Mucosa of descending colon (tissue), 3 donors: ENCODE measurements at regions of chr19 and their contacts with region 1.

Region 1: DNA sequence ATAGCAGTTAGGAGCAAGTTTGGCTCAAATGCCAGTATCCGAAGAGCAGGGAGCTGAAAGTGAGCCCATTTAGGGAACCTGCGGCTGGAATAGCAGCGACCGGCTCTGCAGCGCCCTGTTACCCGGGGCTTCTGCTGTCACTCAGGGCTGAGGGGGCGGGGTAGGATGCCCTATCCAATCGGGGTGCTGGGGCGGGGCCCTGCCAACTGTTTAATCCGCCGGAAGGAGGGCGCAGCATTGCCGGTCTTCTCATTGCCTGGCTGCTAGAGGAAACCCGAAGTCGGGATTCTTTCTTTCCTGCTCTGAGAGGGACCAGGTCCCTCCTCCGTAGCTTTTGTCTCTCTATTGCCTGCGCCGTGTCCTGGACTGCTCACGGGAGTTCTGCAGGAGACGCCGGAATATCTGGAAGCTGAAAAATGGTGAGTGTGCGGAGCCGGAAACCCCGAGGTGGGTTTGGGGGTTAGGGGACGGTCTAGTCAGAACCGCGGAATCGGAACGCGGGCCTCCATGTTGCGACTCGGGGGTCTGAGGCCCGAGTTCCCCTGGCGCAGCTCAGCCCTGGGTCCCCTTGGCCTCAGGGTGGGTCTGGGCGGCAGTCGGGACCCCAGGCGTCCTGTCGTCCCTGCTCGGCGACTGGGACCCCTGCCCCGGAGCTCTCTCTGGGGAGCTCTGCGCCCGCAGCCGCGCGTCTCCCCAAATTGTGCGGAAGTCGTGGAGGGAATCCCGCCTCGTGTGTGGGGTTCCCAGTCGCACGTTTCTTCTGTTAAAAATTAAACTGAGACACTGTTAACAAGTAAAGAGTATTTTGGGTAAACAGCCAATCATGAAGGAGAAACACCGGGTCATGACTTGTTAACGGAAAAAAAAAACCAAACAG is 22.8 kb downstream of the ZNF763 start:
- DNase-seq: peak; percentile 97 to 99 (median 97)
- ATAC-seq: peak; percentile 99
- H3K4me3 ChIP-seq: peak overlapping the region; percentile 66
- H3K4me1 ChIP-seq: no peaks in the 10 kb centered on the region
- CTCF ChIP-seq: no peak

Region 2: DNA sequence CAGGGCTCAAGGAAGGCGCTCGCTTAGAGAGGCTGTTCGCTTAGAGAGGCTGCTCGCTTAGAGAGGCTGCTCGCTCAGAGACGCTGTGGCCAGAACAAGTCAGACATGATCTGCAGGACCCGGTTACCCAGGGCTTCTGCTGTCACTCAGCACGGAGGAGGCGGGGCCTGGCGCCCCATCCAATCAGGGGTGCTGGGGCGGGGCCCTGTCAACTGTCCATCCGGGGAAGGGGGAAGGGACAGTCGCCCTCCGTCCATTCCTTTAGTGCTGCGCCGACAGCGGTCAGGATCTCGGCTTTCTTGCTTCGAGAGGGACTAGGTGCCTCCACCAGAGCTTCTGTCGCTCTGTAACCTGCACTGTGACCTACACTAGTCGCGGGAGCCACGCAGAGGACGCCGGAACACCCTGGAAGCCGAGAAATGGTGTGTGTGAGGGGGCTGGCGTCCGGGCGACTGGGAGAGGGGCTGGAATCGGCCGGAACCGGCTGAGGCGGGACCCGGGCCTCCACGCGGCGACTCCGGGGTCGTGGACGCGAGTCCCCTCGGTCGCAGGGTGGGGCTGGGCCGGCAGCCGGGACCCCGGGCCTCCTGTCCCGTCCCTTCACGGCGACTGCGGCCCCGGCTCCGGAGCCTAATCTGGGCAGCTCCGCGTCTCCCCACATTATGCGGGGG is 173.5 kb before region 1 on chr19 and contains the start of gene ZNF440:
- intact Hi-C with region 1: no loop called
- DNase-seq: peak; percentile 96 to 99 (median 98)
- ATAC-seq: peak; percentile 97
- H3K4me3 ChIP-seq: peak within 1 kb of the TSS; percentile 85
- H3K4me1 ChIP-seq: peaks cover 4% of the 10 kb centered on the region
- CTCF ChIP-seq: no peak
- total RNA-seq, gene ZNF440: 31.9 to 36.9 (median 36.4) TPM

Region 3: DNA sequence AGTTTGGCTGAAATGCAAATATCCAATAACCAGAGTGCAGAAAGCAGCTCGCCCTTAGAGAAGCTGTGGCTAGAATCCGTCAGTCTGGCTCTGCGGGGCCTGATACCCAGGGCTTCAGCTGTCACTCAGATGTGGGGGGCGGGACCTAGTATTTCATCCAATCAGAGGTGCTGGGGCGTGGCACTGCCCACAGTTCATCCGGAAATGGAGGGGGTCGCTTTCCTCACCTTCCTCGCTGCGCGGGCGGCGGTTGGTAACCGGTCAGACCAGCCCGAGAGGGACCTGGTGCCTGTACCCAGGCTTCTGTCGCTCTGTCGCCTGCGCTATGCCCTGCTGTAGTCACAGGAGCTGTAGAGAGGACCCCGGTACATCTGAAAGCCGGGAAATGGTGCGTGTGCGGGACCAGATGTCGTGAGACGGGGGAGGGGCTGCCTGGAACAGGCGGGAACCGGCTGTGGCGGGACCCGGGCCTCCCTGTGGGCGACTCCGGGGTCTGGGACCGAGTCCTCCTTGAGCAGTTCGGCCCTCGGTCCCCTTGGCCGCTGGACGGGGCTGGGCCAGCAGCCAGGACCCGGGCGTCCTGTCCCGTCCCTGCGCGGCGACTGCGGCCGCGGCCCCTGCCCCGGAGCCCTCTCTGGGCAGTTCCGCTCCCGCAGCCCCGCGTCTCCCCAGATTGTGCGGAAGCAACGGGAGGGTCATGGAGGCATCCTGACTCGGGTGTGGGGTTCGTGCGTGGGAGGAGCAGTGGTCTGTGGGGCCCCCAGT is 62.6 kb before region 1 on chr19 and contains the start of gene ZNF700:
- intact Hi-C with region 1: loop called in 1 of 2 experiments (anchors 2 kb)
- DNase-seq: peak; percentile 95 to 100 (median 95)
- ATAC-seq: peak; percentile 96
- H3K4me3 ChIP-seq: peak within 1 kb of the TSS; percentile 76
- H3K4me1 ChIP-seq: peaks cover 10% of the 10 kb centered on the region
- CTCF ChIP-seq: no peak
- total RNA-seq, gene ZNF700: 16.3 to 25.2 (median 17.1) TPM

Region 4: GRCh38 chr19:12055783-12056182 is 68.1 kb after region 1 on chr19:
- intact Hi-C with region 1: no loop called
- DNase-seq: no peak
- ATAC-seq: no peak
- H3K4me3 ChIP-seq: no peak overlapping the region
- H3K4me1 ChIP-seq: peaks cover 15% of the 10 kb centered on the region
- CTCF ChIP-seq: no peak